ENCODE measurements at regions of chr16 and their contacts with region 1.

Region 1: DNA sequence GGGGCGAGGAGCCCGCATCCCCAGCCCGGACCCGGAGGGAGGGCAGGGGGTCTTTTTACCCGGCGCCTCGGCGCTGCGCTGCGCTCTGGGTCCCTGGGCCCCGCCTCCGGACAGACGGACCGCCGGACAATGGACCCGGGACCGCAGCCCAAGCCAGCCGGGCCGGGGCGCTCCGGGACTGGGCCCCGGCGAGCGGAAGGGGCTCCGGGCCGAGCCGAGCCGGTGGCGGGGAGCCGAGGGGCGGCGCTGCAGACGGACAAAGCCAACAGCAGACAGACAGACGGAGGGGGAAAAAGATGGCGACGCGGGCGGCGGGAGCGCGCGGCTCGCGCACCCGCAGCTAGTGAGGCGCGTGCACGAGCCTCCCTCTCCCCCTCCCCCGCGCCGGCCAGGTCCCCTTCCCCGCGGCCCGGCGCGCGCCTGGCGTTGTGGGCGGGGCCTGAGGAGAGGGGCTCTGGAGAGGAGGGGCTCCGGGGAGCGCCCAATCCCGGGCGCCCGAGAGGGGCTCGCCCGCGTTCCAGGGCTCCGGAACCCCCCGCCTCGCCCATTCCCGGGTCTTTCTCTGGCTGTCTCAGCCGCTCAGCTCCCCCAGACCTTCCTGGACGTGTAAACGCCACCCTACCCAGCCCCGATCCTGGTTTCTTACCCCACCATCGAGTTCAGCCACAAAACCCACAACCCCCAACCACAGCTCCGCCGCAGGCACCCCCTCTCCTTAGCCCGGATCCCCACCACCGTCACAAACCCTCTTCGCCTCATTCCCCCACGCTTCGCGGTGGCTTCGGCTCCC is at the start of gene ZNF821:
- DNase-seq: peak; percentile 64
- ATAC-seq: peak; percentile 91
- H3K4me3 ChIP-seq: peak within 1 kb of the TSS; percentile 52
- H3K27ac ChIP-seq: peak within 1 kb of the TSS; percentile 60
- H3K4me1 ChIP-seq: peaks cover 2% of the 10 kb centered on the region; the same call in 1 of the 2 replicates
- H3K27me3 ChIP-seq: no peaks in the 10 kb centered on the region
- CTCF ChIP-seq: no peak; the same call in none of the 2 replicates
- POLR2A ChIP-seq: 0 out of 2 replicates have a peak, but pooled peaks have one; percentile 14
- RAD21 ChIP-seq: no peak; the same call in 1 of the 2 replicates
- total RNA-seq, gene ZNF821: 4.4 and 5.9 TPM in 2 replicates

Region 2: GRCh38 chr16:71626018-71626857 is 257.8 kb before region 1 on chr16 and contains the start of gene MARVELD3:
- CTCF ChIA-PET with region 1: no interaction called
- POLR2A ChIA-PET with region 1: no interaction called
- dilution Hi-C with region 1: no loop called
- in situ Hi-C with region 1: no loop called
- intact Hi-C with region 1: no loop called
- DNase-seq: no peak
- ATAC-seq: peak; percentile 38
- H3K4me3 ChIP-seq: peak within 1 kb of the TSS; percentile 15
- H3K27ac ChIP-seq: no peak within 1 kb of the TSS
- H3K4me1 ChIP-seq: peaks cover 3% of the 10 kb centered on the region; the same call in 1 of the 2 replicates
- H3K27me3 ChIP-seq: peaks cover 38% of the 10 kb centered on the region
- CTCF ChIP-seq: no peak
- POLR2A ChIP-seq: no peak
- RAD21 ChIP-seq: no peak
- total RNA-seq, gene MARVELD3: not detected in 2 replicates

Region 3: GRCh38 chr16:71808593-71809459 is 75.2 kb before region 1 on chr16 and contains the start of gene AP1G1:
- CTCF ChIA-PET with region 1: interaction called, 3 read pairs
- POLR2A ChIA-PET with region 1: no interaction called
- dilution Hi-C with region 1: no loop called
- in situ Hi-C with region 1: no loop called
- intact Hi-C with region 1: loop called (anchors 5 kb)
- DNase-seq: peak; percentile 99
- ATAC-seq: peak; percentile 94
- H3K4me3 ChIP-seq: peak within 1 kb of the TSS; percentile 61
- H3K27ac ChIP-seq: peak within 1 kb of the TSS; percentile 99
- H3K4me1 ChIP-seq: peaks cover 10% of the 10 kb centered on the region
- H3K27me3 ChIP-seq: no peaks in the 10 kb centered on the region
- CTCF ChIP-seq: no peak
- POLR2A ChIP-seq: peak; percentile 96
- RAD21 ChIP-seq: no peak
- total RNA-seq, gene AP1G1: 86.1 and 86.7 TPM in 2 replicates

Region 4: DNA sequence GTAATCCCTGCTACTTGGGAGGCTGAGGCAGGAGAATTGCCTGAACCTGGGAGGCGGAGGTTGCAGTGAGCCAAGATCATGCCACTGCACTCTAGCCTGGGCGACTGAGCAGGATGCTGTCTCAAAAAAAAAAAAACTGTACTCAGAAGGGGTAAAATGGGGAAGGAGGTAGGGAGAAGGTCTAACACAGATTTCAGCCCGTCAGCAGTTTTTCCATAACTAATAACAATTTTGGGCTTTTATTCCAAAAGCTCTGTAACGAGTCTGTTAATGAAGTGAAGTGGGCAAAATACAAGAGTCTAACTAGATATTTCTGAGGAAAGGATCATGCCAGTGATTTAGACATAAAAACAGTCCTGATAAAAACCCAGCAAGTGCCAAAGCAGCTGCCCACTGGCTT is 10.8 kb before region 1 on chr16:
- CTCF ChIA-PET with region 1: interaction called, 10 read pairs
- POLR2A ChIA-PET with region 1: no interaction called
- dilution Hi-C with region 1: no loop called
- in situ Hi-C with region 1: no loop called
- intact Hi-C with region 1: no loop called
- DNase-seq: no peak
- ATAC-seq: no peak
- H3K4me3 ChIP-seq: no peak overlapping the region
- H3K27ac ChIP-seq: no peak overlapping the region
- H3K4me1 ChIP-seq: no peaks in the 10 kb centered on the region
- H3K27me3 ChIP-seq: no peaks in the 10 kb centered on the region
- CTCF ChIP-seq: no peak
- POLR2A ChIP-seq: no peak
- RAD21 ChIP-seq: no peak

Region 5: GRCh38 chr16:71917900-71918299 is 33.9 kb after region 1 on chr16:
- CTCF ChIA-PET with region 1: interaction called, 3 read pairs
- POLR2A ChIA-PET with region 1: interaction called, 11 read pairs
- dilution Hi-C with region 1: no loop called
- in situ Hi-C with region 1: no loop called
- intact Hi-C with region 1: no loop called
- DNase-seq: peak; percentile 82
- ATAC-seq: peak; percentile 60
- H3K4me3 ChIP-seq: no peak overlapping the region
- H3K27ac ChIP-seq: no peak overlapping the region
- H3K4me1 ChIP-seq: peaks cover 2% of the 10 kb centered on the region
- H3K27me3 ChIP-seq: no peaks in the 10 kb centered on the region
- CTCF ChIP-seq: no peak
- POLR2A ChIP-seq: no peak
- RAD21 ChIP-seq: no peak